ENCODE measurements at regions of chr1 and their contacts with region 1.

Region 1: DNA sequence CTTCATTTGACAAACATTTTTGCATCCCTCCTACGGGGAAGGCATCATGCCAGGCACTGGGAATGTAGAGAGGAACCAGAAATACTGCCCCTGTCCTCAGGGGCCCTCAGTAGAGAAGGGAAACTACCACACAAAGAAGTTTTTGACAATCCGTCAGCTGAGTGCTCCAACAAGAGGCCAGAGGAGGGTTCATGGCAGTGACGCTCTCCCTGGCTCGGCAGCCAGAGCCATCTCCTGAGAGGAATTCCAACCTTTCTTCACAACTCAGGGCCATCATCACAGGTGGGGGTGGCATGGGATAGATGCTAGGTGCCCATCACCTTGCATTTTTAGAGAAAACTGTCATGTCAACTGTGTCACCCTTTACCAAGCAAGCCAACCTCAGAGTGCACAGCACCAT is 154.1 kb downstream of the HIVEP3 start:
- DNase-seq: peak in 1 of 2 donors; percentile 63
- H3K4me3 ChIP-seq: no peak overlapping the region
- H3K27ac ChIP-seq: no peak overlapping the region
- H3K4me1 ChIP-seq: no peaks in the 10 kb centered on the region
- H3K27me3 ChIP-seq: no peaks in the 10 kb centered on the region
- CTCF ChIP-seq: no peak

Region 2: GRCh38 chr1:41802532-41803501 is 38.2 kb after region 1 on chr1:
- intact Hi-C with region 1: loop called (anchors 1 kb)
- DNase-seq: peak; percentile 75 to 85
- H3K4me3 ChIP-seq: no peak overlapping the region
- H3K27ac ChIP-seq: peak overlapping the region; percentile 22 to 23
- H3K4me1 ChIP-seq: peaks cover 0 to 17% (median 6%) of the 10 kb centered on the region in 4 donors
- H3K27me3 ChIP-seq: no peaks in the 10 kb centered on the region
- CTCF ChIP-seq: no peak

Region 3: DNA sequence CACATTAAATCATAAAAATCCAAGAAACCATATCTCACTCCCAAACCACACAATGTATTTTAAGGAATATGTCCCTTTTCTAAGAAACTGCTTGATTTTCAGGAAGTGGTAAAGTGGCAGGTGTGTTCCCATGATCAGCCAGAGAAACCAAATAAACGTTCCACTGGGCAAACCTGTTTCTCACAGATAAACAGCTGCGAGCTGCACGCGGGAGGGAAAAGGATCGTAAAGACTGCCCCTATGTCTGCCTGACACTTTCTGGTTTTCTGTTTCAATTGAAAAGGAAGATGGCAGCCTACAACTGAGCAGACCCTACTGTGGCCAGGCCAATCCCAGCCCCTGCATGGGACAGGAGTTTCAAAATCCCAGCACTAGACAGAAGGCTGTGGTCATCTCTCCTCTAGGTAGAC is 117.4 kb after region 1 on chr1:
- intact Hi-C with region 1: no loop called
- DNase-seq: no peak
- H3K4me3 ChIP-seq: no peak overlapping the region
- H3K27ac ChIP-seq: no peak overlapping the region
- H3K4me1 ChIP-seq: peaks cover 0 to 21% (median 6%) of the 10 kb centered on the region in 4 donors
- H3K27me3 ChIP-seq: no peaks in the 10 kb centered on the region
- CTCF ChIP-seq: no peak